Activated CD4-positive, alpha-beta T cell treated with anti-CD3 and anti-CD28 coated beads, Interleukin-2, amount 10 ng/mL, durations not matched to agents 24 days and 14 days (primary cell): ENCODE measurements at regions of chr5 and their contacts with region 1.

Region 1: DNA sequence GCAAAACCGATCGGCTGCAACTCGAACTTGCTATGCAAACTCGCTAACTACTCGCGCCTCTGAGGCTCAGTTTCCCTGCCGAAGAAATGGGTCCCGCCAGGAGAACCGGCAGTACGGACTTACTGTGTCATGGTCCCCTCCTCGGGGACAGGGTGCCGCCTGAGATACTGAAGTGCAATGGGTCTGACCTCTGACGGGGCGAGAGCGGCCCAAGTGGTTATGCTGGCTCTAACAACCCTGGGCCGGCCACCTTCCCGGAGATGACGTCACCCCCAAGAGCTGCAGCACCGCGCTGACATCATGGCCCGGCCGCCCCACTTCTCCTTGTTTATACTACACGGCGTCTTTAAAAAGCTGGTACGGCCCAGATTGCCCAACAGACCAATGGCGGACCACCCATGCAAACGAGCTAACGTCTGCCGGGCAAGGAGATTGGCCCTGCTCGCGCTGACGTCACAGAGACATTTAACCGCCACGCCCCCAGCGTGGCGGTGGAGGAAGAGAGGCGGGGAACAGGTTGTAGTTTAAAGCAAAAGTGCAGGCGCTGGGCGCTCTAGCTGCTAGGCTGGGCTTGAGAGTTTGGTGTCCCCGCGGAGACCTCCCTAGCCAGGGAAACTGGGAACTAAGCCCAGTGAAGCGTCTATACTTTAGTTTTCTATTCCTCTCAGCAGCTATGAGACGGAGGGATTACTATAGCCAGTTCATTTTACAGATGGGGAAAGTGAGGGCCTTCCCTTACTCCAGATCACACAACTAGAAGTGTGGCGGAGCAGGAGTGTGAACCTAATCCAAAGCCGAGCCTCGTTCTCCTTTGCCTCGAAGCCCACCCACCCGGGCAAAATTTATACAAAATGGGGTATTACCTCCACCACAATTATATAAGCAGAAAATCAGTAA is 654 bp upstream of the RNF44 start:
- DNase-seq: peak; percentile 99
- H3K4me3 Mint-ChIP-seq: peak overlapping the region; percentile 93
- H3K27ac Mint-ChIP-seq: peak overlapping the region; percentile 95
- H3K4me1 Mint-ChIP-seq: peaks cover 72% of the 10 kb centered on the region
- H3K27me3 Mint-ChIP-seq: no peaks in the 10 kb centered on the region

Region 2: DNA sequence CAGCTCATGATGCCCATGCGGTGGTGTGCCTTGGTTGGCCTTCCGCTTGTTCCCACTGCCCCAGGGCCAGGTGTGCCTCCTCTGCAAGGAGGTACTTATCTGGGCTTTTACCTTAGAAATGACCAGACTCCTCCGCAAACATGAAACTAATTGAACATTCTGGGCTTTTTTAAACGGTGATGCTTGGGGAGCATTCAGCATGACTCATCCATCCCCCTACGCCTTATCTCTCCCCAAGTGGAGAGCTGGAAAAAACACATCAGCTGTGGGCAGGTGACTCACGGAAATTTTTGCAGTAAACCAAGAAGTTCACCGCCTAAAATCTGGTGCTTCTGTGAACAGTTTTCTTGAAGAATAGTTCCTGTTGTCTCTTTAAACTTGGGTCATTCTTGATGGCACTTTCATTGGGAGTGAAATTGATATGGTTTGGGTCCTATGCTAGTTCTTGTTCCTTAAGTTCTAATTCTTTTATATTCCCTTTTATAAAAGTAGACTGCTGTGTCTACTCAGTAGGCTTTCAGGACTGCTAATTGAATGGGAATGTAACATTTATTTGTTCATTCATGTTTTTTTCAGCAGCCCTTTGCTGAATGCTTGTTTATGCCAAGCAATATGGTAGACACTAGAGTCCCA is 1019.9 kb before region 1 on chr5:
- intact Hi-C with region 1: loop called (anchors 5 kb)
- DNase-seq: peak; percentile 91
- H3K4me3 Mint-ChIP-seq: peak overlapping the region; percentile 73
- H3K27ac Mint-ChIP-seq: peak overlapping the region; percentile 95
- H3K4me1 Mint-ChIP-seq: peaks cover 79% of the 10 kb centered on the region
- H3K27me3 Mint-ChIP-seq: peaks cover 2% of the 10 kb centered on the region

Region 3: GRCh38 chr5:175922192-175922885 is 615.5 kb before region 1 on chr5:
- intact Hi-C with region 1: no loop called
- DNase-seq: no peak
- H3K4me3 Mint-ChIP-seq: no peak overlapping the region
- H3K27ac Mint-ChIP-seq: no peak overlapping the region
- H3K4me1 Mint-ChIP-seq: peaks cover 2% of the 10 kb centered on the region
- H3K27me3 Mint-ChIP-seq: no peaks in the 10 kb centered on the region

Region 4: DNA sequence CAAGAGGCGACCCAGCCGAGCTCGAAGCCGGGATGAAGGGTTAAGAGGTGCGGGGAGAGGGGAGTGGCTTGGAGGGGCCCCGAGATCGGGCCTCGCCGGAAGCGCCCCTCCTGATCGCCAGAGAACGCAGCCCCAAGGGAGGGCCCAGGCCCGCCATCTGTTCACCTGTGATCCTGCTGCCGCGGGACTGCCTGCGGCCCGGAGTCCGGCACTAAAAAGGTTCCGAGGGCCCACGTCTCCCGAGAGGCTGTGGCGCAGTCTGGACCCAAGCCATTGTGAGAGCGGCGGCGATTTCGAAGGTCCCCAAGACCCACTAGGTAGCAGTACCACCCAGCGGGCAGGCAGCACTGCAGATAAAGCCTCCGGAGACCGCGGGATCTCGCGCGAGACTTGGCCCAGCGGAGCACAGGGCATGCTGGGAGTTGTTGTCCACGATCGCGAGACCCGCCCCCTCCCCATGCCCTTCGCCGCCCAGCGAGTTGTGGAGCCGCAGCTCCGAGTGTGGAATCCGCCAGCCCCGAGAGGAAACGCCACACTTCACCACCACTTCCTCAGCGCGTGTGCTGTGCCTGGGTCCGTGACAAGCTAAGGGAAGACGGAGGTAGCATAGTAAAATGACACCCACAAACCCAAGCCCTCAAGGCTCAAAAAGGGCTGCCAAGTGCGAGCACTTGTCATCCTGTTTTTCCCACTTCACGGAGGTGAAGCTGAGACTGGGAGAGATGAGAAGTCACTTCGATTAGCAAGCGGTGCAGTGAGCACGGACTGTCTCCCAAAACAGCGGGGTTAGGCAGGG is 176.2 kb before region 1 on chr5 and contains the start of gene KIAA1191:
- intact Hi-C with region 1: loop called (anchors 2 kb)
- DNase-seq: peak; percentile 98
- H3K4me3 Mint-ChIP-seq: peak within 1 kb of the TSS; percentile 96
- H3K27ac Mint-ChIP-seq: peak within 1 kb of the TSS; percentile 93
- H3K4me1 Mint-ChIP-seq: peaks cover 21% of the 10 kb centered on the region
- H3K27me3 Mint-ChIP-seq: no peaks in the 10 kb centered on the region
- total RNA-seq, gene KIAA1191: 55.5 and 59.7 TPM in 2 replicates

Region 5: GRCh38 chr5:176415952-176416924 is 121.6 kb before region 1 on chr5 and contains the start of gene CLTB:
- intact Hi-C with region 1: loop called (anchors 1 kb)
- DNase-seq: peak; percentile 94
- H3K4me3 Mint-ChIP-seq: peak within 1 kb of the TSS; percentile 86
- H3K27ac Mint-ChIP-seq: peak within 1 kb of the TSS; percentile 78
- H3K4me1 Mint-ChIP-seq: peaks cover 30% of the 10 kb centered on the region
- H3K27me3 Mint-ChIP-seq: peaks cover 8% of the 10 kb centered on the region
- total RNA-seq, gene CLTB: 71.5 and 76.2 TPM in 2 replicates

Region 6: GRCh38 chr5:176486189-176486757 is 51.6 kb before region 1 on chr5:
- intact Hi-C with region 1: loop called (anchors 5 kb)
- DNase-seq: no peak
- H3K4me3 Mint-ChIP-seq: no peak overlapping the region
- H3K27ac Mint-ChIP-seq: no peak overlapping the region
- H3K4me1 Mint-ChIP-seq: peaks cover 36% of the 10 kb centered on the region
- H3K27me3 Mint-ChIP-seq: no peaks in the 10 kb centered on the region

Region 7: DNA sequence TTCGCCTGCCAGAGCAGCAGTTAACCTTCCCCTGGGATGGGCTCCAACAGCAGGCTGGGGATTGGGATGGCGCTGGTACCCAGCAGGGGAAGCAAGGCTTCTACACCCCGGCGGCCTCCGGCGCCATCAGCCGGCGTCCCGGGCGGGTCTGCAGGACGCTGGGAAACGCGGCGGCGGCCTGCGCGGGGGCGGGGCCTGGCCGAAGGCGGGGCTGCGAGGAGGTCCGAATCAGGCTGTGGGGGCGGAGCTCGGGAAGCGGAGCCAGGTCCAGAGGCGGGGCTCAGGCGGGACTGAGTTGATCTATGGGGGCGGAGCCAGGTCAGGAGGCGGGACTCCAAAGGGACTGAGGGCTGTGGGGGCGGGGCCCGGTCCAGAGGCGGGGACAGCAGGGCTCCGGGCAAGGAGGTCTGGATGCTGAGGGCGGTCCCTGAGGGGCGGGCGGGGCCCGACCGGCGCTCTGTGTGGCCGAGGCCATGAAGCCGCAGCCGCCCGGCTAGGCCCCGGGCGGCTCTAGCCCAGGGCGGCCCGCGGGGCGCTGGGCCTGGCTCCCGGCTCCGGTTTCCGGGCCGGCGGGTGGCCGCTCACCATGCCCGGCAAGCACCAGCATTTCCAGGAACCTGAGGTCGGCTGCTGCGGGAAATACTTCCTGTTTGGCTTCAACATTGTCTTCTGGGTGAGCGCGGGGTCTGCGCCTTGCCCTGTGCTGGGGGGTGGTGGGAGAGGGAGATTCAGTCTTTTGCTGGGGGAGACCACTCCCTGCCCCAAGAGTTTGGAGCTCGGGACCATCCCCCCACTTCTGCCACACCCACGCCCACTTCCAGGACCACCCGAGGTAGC is 109.4 kb after region 1 on chr5 and contains the start of gene TSPAN17:
- intact Hi-C with region 1: loop called (anchors 2 kb)
- DNase-seq: peak; percentile 100
- H3K4me3 Mint-ChIP-seq: peak within 1 kb of the TSS; percentile 91
- H3K27ac Mint-ChIP-seq: peak within 1 kb of the TSS; percentile 89
- H3K4me1 Mint-ChIP-seq: peaks cover 39% of the 10 kb centered on the region
- H3K27me3 Mint-ChIP-seq: no peaks in the 10 kb centered on the region
- total RNA-seq, gene TSPAN17: 29.3 and 32.0 TPM in 2 replicates

Region 8: DNA sequence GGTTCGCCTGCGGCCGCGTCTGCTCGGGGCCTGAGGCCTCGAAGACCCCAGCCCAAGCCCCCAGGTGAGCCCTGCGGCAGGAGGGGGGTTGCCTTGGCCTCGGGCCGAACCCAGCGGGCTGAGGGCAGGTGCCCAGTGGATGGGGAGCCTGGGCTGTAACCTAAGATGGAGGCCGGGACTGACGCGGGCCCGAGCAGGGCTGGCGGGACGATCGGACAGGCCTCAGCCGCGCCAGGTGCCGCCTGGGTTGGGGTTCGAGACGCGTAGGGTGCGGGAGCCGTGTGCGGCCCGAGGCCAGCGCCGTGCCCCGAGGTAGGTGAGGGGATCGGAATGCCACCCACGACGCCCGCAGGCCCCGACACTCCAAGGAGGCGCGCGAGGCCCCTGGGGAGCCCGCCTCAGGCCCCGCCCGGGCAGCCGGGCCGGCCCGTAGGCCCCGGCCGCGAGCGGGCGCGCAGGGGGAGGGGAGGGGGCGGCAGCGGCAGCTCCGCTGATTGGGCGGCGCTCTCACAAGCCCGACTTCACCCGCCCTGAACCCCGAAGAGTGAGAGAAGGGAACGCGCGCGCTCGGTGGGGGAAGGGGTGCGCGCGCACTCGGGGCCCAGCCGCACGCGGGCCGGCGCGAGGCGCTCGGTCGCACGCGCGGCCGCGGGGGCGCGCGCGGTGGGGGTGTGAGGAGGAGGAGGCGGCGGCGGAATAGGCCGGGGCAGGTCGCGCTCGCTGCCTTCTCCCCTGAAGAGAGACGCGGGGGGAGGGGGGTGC is 595.4 kb after region 1 on chr5 and contains the start of gene NSD1:
- intact Hi-C with region 1: loop called (anchors 2 kb)
- DNase-seq: peak; percentile 97
- H3K4me3 Mint-ChIP-seq: peak within 1 kb of the TSS; percentile 95
- H3K27ac Mint-ChIP-seq: peak within 1 kb of the TSS; percentile 92
- H3K4me1 Mint-ChIP-seq: peaks cover 46% of the 10 kb centered on the region
- H3K27me3 Mint-ChIP-seq: no peaks in the 10 kb centered on the region
- total RNA-seq, gene NSD1: 103 and 108 TPM in 2 replicates